CD8-positive, alpha-beta T cell (primary cell): ENCODE measurements at regions of chr11 and their contacts with region 1.

Region 1: GRCh38 chr11:65497141-65498041 is 1.5 kb upstream of the MALAT1 start:
- DNase-seq: peak; percentile 95 to 99 (median 98)
- ATAC-seq: peak; percentile 80
- H3K4me3 ChIP-seq: peak overlapping the region; percentile 72 to 84
- H3K4me3 Mint-ChIP-seq: no peak overlapping the region
- H3K27ac ChIP-seq: peak overlapping the region; percentile 98 to 99
- H3K27ac Mint-ChIP-seq: no peak overlapping the region
- H3K4me1 ChIP-seq: peaks cover 13% of the 10 kb centered on the region
- H3K4me1 Mint-ChIP-seq: peaks cover 19% of the 10 kb centered on the region
- H3K27me3 ChIP-seq: no peaks in the 10 kb centered on the region
- H3K27me3 Mint-ChIP-seq: no peaks in the 10 kb centered on the region
- CTCF ChIP-seq: no peak

Region 2: DNA sequence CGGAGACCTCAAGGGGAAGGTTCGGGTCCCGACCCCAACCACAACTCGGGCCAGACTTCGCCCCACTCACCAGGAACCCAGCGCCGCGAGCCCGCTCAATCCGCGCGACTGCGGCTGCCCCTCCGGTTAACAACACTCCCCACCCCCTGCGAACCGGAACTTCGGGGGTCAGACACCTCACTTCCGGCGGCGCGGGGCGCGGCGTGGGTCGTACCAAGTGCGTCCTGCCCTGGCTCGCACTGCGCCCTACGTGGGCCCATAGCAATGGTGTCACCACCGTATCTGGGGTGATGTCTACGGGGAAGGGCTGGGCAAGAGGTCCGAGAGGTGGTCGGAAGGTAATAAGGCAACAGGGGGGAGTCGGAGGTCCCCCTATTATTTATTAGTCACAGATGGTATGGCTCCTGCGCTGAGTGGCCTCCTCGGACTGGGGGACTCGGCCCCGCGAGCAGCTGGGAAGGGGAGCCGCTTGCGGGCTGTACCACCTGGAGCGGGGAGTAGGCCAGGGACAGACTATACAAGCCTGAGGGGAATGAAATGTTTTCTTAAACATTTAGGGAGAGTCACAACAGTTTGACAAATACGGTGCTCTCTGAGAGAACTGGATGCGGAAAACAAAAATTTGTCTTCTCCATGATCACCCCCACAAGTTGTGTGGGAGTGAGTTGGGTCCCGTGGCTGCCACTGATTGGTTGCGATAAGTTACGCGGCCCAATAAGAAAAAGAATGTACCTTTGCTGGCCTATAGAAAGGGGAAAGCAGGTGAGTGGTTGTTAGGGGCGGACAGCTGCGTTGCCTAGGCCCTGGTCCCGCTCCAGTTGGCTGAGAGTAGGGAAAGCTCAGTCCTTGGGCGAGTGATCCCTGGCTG is 362.8 kb before region 1 on chr11 and contains the start of gene SYVN1:
- CTCF ChIA-PET with region 1: no interaction called
- POLR2A ChIA-PET with region 1: interaction called, 10 read pairs
- intact Hi-C with region 1: no loop called
- DNase-seq: peak; percentile 79 to 97 (median 91)
- ATAC-seq: peak; percentile 88
- H3K4me3 ChIP-seq: peak within 1 kb of the TSS; percentile 83 to 85
- H3K4me3 Mint-ChIP-seq: peak within 1 kb of the TSS; percentile 99
- H3K27ac ChIP-seq: peak within 1 kb of the TSS; percentile 96 to 98
- H3K27ac Mint-ChIP-seq: peak within 1 kb of the TSS; percentile 100
- H3K4me1 ChIP-seq: peaks cover 33% of the 10 kb centered on the region
- H3K4me1 Mint-ChIP-seq: peaks cover 39% of the 10 kb centered on the region
- H3K27me3 ChIP-seq: no peaks in the 10 kb centered on the region
- H3K27me3 Mint-ChIP-seq: no peaks in the 10 kb centered on the region
- CTCF ChIP-seq: no peak
- total RNA-seq, gene SYVN1: 93.0 to 95.5 TPM

Region 3: DNA sequence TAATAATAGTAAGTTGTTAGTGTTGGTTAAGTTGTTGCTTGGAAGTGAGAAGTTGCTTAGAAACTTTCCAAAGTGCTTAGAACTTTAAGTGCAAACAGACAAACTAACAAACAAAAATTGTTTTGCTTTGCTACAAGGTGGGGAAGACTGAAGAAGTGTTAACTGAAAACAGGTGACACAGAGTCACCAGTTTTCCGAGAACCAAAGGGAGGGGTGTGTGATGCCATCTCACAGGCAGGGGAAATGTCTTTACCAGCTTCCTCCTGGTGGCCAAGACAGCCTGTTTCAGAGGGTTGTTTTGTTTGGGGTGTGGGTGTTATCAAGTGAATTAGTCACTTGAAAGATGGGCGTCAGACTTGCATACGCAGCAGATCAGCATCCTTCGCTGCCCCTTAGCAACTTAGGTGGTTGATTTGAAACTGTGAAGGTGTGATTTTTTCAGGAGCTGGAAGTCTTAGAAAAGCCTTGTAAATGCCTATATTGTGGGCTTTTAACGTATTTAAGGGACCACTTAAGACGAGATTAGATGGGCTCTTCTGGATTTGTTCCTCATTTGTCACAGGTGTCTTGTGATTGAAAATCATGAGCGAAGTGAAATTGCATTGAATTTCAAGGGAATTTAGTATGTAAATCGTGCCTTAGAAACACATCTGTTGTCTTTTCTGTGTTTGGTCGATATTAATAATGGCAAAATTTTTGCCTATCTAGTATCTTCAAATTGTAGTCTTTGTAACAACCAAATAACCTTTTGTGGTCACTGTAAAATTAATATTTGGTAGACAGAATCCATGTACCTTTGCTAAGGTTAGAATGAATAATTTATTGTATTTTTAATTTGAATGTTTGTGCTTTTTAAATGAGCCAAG is 72.1 kb before region 1 on chr11:
- CTCF ChIA-PET with region 1: interaction called, 229 read pairs
- POLR2A ChIA-PET with region 1: interaction called, 1,786 read pairs
- intact Hi-C with region 1: loop called (anchors 1 kb)
- DNase-seq: peak; percentile 72 to 98 (median 82)
- ATAC-seq: peak; percentile 48
- H3K4me3 ChIP-seq: peak overlapping the region; percentile 76 to 95
- H3K4me3 Mint-ChIP-seq: peak overlapping the region; percentile 94
- H3K27ac ChIP-seq: peak overlapping the region; percentile 99 to 100
- H3K27ac Mint-ChIP-seq: peak overlapping the region; percentile 98
- H3K4me1 ChIP-seq: peaks cover 53% of the 10 kb centered on the region
- H3K4me1 Mint-ChIP-seq: peaks cover 66% of the 10 kb centered on the region
- H3K27me3 ChIP-seq: no peaks in the 10 kb centered on the region
- H3K27me3 Mint-ChIP-seq: no peaks in the 10 kb centered on the region
- CTCF ChIP-seq: no peak

Region 4: DNA sequence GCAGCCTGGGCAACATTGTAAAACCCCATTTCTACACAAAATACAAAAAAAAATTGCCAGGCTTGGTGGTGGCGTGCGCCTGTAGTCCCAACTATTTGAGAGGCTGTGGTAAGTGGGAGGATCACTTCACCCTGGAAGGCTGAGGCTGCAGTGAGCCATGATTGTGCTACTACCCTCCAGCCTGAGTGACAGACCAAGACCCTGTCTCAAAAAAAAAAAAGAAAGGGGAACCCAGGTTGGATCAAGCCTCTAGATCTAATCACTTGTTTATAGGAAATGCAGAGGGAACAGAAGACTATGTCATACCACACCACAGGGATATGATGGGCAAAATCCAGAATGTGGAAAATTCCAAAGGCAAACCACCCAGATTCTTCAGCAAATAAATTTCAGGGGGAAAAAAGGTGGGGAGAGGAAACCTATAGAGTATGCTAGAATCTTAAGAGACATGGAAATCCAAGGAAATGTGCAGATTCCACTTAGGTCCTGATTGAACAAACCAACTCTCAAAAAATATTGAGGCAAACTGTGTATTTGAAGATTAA is 15.0 kb before region 1 on chr11:
- CTCF ChIA-PET with region 1: interaction called, 36 read pairs
- POLR2A ChIA-PET with region 1: interaction called, 506 read pairs
- intact Hi-C with region 1: loop called (anchors 1 kb)
- DNase-seq: no peak
- ATAC-seq: no peak
- H3K4me3 ChIP-seq: no peak overlapping the region
- H3K4me3 Mint-ChIP-seq: no peak overlapping the region
- H3K27ac ChIP-seq: no peak overlapping the region
- H3K27ac Mint-ChIP-seq: no peak overlapping the region
- H3K4me1 ChIP-seq: no peaks in the 10 kb centered on the region
- H3K4me1 Mint-ChIP-seq: peaks cover 10% of the 10 kb centered on the region
- H3K27me3 ChIP-seq: no peaks in the 10 kb centered on the region
- H3K27me3 Mint-ChIP-seq: no peaks in the 10 kb centered on the region
- CTCF ChIP-seq: no peak

Region 5: GRCh38 chr11:65546217-65546958 is 49.0 kb after region 1 on chr11:
- CTCF ChIA-PET with region 1: interaction called, 13 read pairs
- POLR2A ChIA-PET with region 1: interaction called, 18 read pairs
- intact Hi-C with region 1: no loop called
- DNase-seq: peak; percentile 96 to 100 (median 98)
- ATAC-seq: peak; percentile 89
- H3K4me3 ChIP-seq: peak overlapping the region; percentile 49 to 50
- H3K4me3 Mint-ChIP-seq: peak overlapping the region; percentile 82
- H3K27ac ChIP-seq: peak overlapping the region; percentile 62 to 74
- H3K27ac Mint-ChIP-seq: peak overlapping the region; percentile 95
- H3K4me1 ChIP-seq: peaks cover 39% of the 10 kb centered on the region
- H3K4me1 Mint-ChIP-seq: peaks cover 48% of the 10 kb centered on the region
- H3K27me3 ChIP-seq: no peaks in the 10 kb centered on the region
- H3K27me3 Mint-ChIP-seq: no peaks in the 10 kb centered on the region
- CTCF ChIP-seq: no peak

Region 6: GRCh38 chr11:65615229-65615941 is 118.0 kb after region 1 on chr11 and contains the start of gene PCNX3:
- CTCF ChIA-PET with region 1: no interaction called
- POLR2A ChIA-PET with region 1: interaction called, 28 read pairs
- intact Hi-C with region 1: no loop called
- DNase-seq: peak; percentile 99 to 100 (median 100)
- ATAC-seq: peak; percentile 88
- H3K4me3 ChIP-seq: peak within 1 kb of the TSS; percentile 78 to 89
- H3K4me3 Mint-ChIP-seq: peak within 1 kb of the TSS; percentile 96
- H3K27ac ChIP-seq: peak within 1 kb of the TSS; percentile 92 to 97
- H3K27ac Mint-ChIP-seq: peak within 1 kb of the TSS; percentile 96
- H3K4me1 ChIP-seq: peaks cover 46% of the 10 kb centered on the region
- H3K4me1 Mint-ChIP-seq: peaks cover 45% of the 10 kb centered on the region
- H3K27me3 ChIP-seq: no peaks in the 10 kb centered on the region
- H3K27me3 Mint-ChIP-seq: no peaks in the 10 kb centered on the region
- CTCF ChIP-seq: no peak
- total RNA-seq, gene PCNX3: 52.7 to 56.4 TPM

Region 7: DNA sequence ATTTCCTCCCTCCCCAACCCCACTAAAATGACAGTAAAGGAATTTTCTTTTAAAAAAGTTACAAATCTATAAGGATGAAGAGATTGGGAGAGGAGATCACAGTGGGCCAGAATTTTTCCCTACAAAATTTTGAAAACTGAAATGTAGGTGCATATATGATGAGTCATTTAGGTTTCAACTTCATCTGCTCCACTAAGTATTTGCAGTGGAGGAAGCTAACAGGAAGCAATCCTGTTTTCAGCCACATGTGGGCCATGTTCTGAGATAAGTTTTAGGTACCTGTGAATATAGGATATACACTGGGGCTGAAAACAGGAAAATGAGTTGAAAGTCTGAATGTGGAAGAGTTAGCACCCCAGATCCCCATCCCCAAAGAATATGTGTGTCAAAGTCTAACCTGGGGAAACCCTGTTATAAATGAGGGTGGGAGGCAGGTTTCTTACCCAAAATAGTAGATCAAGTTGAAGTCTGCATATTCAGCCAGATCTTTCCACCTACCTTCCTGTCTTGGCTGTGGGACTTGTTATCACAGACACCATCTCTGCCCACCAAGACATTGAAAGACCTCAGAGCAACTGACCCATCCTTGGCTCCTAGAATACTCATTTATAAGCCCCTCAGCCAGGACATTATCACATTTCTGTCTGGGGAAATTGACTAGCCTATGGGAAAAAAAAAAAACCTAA is 659.9 kb after region 1 on chr11:
- CTCF ChIA-PET with region 1: no interaction called
- POLR2A ChIA-PET with region 1: no interaction called
- intact Hi-C with region 1: no loop called
- DNase-seq: no peak
- ATAC-seq: peak; percentile 34
- H3K4me3 ChIP-seq: no peak overlapping the region
- H3K4me3 Mint-ChIP-seq: no peak overlapping the region
- H3K27ac ChIP-seq: no peak overlapping the region
- H3K27ac Mint-ChIP-seq: peak overlapping the region; percentile 78
- H3K4me1 ChIP-seq: peaks cover 6% of the 10 kb centered on the region
- H3K4me1 Mint-ChIP-seq: peaks cover 58% of the 10 kb centered on the region
- H3K27me3 ChIP-seq: no peaks in the 10 kb centered on the region
- H3K27me3 Mint-ChIP-seq: no peaks in the 10 kb centered on the region
- CTCF ChIP-seq: no peak